ENCODE measurements at regions of chr20 and their contacts with region 1.

Region 1: GRCh38 chr20:56468316-56469082 is at the start of gene RTF2:
- DNase-seq: peak; percentile 96
- ATAC-seq: peak; percentile 99
- total RNA-seq, gene RTF2: 87.1 TPM

Region 2: DNA sequence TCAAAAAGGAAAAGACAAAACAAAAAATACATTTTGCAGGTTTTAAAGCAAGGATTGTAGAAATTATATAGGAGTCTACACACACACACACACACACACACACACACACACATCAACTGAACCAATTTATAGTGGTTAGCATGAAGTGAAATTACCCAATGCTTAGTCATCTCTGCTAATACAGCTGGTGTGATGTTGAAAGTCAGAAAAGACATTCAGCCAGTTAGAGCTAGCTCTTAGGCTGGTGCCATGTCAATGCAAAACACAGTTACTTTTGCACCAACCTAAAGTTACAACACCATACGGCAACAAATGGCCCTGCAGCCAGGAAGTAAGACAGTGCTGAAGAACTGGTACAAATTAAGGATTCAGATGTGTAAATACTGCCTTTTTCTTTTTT is 94.6 kb before region 1 on chr20:
- intact Hi-C with region 1: no loop called
- DNase-seq: no peak
- ATAC-seq: no peak

Region 3: DNA sequence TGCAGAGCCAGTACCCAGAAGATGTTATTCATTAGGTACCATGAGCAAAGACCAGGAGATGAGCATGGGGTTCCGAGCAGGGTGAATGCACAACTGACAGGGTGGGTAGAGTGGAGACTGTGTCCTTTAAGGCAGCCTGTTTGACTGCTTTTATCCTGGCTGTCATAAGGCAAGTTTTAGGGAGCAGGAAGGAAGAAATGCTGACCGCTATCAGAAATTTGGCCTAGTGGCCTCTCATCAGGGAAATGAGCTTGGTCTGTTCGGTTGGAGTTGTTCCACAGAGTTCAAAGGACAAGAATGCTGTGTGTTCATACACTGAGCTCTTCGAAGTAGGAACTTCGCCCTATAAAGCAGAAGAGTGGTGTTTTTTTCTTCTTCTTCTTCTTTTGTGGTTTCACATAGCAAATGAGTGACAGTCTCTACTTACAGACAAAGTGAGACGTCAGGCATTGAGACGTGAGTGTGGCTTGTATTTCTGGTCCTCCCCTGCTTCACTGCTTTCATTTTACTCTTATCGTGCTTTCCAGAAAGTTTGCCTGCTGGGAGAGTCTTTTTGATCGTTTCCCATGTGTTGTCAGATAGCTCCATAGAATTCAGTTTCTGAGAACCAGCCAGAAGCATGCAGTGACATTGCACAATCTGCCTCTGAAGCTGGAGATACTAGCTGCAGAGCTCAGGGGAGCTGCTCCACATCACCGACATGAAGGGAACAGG is 56.6 kb before region 1 on chr20 and contains the start of gene CASS4:
- intact Hi-C with region 1: loop called (anchors 5 kb)
- DNase-seq: no peak
- ATAC-seq: peak; percentile 80
- total RNA-seq, gene CASS4: 0.41 TPM

Measured in Right ventricle myocardium inferior (tissue), 1 donor.